Activated naive CD4-positive, alpha-beta T cell treated with anti-CD3 and anti-CD28 coated beads for 36 hours (primary cell): ENCODE measurements at regions of chr17 and their contacts with region 1.

Region 1: DNA sequence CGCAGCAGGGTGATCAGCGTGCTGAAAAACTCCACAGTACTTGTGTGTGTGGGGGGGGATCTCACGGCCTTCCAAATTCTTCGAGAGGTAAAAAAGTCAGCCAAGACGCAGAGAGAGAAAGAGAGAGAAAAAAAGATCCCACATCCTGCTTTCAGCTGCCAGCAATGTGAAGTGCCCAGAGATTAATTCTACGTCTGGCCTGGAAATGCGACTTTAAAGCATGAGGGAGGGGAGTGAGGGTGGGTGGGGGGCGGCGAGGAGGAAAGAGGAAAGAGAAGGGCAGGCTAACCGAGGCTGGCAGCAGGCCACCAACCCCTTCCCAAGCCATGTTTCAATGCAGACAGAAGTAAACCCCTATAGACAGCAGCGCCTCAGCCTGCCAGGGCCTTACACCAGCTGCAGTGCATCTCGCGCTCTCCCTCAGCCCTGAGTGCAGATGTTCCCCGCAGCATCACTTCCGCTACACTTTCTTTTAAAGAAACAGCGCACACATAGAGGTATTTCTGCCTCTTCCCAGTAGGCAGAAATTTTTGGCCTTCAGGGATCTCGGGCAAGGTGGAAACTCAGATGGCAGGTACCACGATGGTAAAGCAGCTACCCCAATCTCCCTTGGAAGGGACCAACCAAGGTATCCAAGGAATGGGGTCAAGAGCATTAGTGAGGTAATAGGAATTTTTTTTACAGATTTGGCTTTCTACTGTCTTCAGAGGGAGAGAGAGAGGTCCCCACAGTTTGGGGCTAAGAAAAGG is 87.8 kb downstream of the SMG6 start:
- DNase-seq: peak; percentile 86
- H3K4me3 Mint-ChIP-seq: peak overlapping the region; percentile 78
- H3K27ac Mint-ChIP-seq: peak overlapping the region; percentile 94
- H3K4me1 Mint-ChIP-seq: peaks cover 52% of the 10 kb centered on the region
- H3K27me3 Mint-ChIP-seq: no peaks in the 10 kb centered on the region

Region 2: DNA sequence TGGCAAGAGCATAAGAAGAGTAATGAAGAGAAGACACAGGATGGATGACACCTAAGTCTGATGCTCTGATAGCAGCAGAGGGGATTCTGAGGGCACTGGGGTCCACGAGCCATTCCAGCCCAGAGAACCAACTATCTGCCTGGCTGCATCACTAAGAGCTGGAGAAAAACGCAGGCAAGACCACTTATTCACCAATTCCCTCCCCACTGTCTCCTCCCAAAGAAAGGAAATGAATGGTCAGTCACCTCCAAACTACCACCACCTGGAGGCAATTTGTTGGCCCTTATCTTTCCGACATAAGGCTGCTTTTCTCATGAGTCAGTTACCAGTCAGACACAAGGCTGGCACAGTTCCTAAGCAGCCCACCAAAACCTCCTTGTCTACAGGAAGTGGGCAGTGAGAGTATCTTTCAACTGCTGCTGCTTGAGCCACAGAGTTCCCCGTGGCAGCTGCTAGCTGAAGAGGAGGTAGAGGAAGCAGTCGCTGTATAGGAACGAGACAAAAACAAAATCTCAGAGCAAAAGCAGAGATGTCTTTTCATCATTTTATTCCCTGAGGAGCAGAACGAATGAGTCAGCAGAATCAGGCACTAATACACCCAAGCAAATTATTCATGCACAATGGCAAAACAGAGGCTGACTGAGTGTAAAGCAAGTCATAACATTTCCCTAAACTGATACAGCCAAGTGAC is 23.3 kb before region 1 on chr17:
- CTCF ChIA-PET with region 1: interaction called, 6 read pairs
- intact Hi-C with region 1: loop called (anchors 1 kb)
- DNase-seq: peak; percentile 69
- H3K4me3 Mint-ChIP-seq: no peak overlapping the region
- H3K27ac Mint-ChIP-seq: peak overlapping the region; percentile 59
- H3K4me1 Mint-ChIP-seq: peaks cover 54% of the 10 kb centered on the region
- H3K27me3 Mint-ChIP-seq: no peaks in the 10 kb centered on the region